ENCODE measurements at regions of chr14 and their contacts with region 1.

Region 1: DNA sequence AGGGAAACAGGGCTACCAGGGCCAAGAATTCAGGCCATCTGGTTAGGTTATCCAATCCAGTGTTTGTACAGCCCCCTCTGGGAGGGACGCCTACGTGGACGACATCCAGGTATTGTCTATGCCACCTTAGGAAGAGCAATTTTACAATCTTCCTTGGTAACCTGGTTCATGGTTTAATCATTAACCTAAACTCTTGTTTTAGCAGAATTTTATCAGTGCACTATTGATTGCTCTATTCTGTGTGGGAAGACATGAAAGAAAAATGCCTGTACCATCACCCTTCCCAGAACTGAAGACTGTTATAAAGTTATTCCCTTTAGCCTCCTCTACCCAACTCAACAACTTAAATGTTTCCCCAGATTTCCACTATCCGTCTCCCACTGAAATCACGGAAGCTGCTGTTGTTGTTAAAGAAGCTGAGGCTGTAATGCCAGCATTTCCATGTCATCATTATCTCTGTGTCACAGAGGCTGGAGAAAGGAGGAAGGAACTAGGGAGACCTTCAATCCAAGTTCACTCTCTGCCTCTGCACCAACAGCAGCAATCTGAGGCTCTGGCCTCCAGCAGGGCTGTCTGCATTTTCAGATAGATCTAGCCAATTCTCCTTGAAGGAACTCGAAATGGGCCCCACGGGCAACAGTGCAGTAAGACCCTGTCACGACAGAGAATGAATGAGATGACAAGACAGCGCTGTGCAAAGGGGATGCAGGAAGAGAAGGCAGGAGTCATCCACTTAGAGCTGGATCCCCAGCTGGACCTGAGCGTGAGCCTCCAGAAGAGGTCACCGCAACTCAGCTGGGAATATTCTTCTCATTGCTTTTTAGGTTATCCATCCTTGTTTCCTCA is 183.4 kb upstream of the GZMB start:
- DNase-seq: peak; percentile 56
- H3K4me3 ChIP-seq: no peak overlapping the region
- H3K27ac ChIP-seq: no peak overlapping the region
- H3K4me1 ChIP-seq: 0 out of 2 replicates have a peak, but pooled peaks cover 7% of the 10 kb centered on the region
- H3K27me3 ChIP-seq: no peaks in the 10 kb centered on the region

Region 2: GRCh38 chr14:24943024-24943423 is 125.6 kb after region 1 on chr14:
- in situ Hi-C with region 1: no loop called
- DNase-seq: peak; percentile 83
- H3K4me3 ChIP-seq: peak overlapping the region; percentile 44
- H3K27ac ChIP-seq: peak overlapping the region; percentile 73
- H3K4me1 ChIP-seq: peaks cover 17% of the 10 kb centered on the region
- H3K27me3 ChIP-seq: no peaks in the 10 kb centered on the region

Region 3: GRCh38 chr14:25049568-25050268 is 232.3 kb after region 1 on chr14 and contains the start of gene STXBP6:
- in situ Hi-C with region 1: loop called (anchors 10 kb)
- DNase-seq: peak; percentile 92
- H3K4me3 ChIP-seq: peak within 1 kb of the TSS; percentile 87
- H3K27ac ChIP-seq: peak within 1 kb of the TSS; percentile 61
- H3K4me1 ChIP-seq: peaks cover 18% of the 10 kb centered on the region
- H3K27me3 ChIP-seq: no peaks in the 10 kb centered on the region
- total RNA-seq, gene STXBP6: 13.9 and 14.4 TPM in 2 replicates

Region 4: GRCh38 chr14:25132732-25133422 is 315.4 kb after region 1 on chr14:
- in situ Hi-C with region 1: loop called (anchors 10 kb)
- DNase-seq: peak; percentile 81
- H3K4me3 ChIP-seq: peak overlapping the region; percentile 46; the same call in 1 of the 2 replicates
- H3K27ac ChIP-seq: no peak overlapping the region
- H3K4me1 ChIP-seq: no peaks in the 10 kb centered on the region
- H3K27me3 ChIP-seq: peaks cover 4% of the 10 kb centered on the region; the same call in 1 of the 2 replicates